HEK293 (cell line): ENCODE measurements at regions of chr2 and their contacts with region 1.

Region 1: GRCh38 chr2:18404708-18405107 is 155.7 kb downstream of the RDH14 start:
- H3K4me3 ChIP-seq: no peak overlapping the region
- H3K27ac ChIP-seq: no peak overlapping the region
- H3K4me1 ChIP-seq: no peaks in the 10 kb centered on the region
- CTCF ChIP-seq: no peak

Region 2: DNA sequence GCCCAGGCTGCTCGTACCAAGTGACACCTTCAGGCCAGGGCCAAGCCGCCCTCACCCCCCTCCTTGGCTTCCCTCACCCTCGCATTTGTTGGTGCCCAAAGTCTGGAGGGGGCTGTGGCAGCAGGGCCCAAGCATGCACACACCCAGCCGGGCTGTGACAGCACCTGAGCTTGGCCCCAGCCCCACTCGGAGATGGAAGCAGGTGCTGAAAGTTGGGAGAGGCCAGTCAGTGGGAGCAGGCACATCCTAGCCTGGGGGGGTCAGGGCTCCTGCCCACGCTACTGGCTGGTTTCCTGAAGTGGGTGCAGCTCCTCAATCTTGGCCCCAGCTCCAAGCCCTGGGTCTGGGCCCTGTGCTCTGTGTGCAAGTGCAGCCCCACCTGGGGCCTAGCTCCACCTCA is 72.2 kb before region 1 on chr2:
- CTCF ChIA-PET with region 1: no interaction called
- POLR2A ChIA-PET with region 1: no interaction called
- H3K4me3 ChIP-seq: no peak overlapping the region
- H3K27ac ChIP-seq: no peak overlapping the region
- H3K4me1 ChIP-seq: no peaks in the 10 kb centered on the region
- CTCF ChIP-seq: no peak

Region 3: GRCh38 chr2:18387441-18388206 is 17.1 kb before region 1 on chr2:
- CTCF ChIA-PET with region 1: interaction called, 65 read pairs
- POLR2A ChIA-PET with region 1: no interaction called
- H3K4me3 ChIP-seq: no peak overlapping the region
- H3K27ac ChIP-seq: no peak overlapping the region
- H3K4me1 ChIP-seq: no peaks in the 10 kb centered on the region
- CTCF ChIP-seq: peak; percentile 78

Region 4: GRCh38 chr2:18425210-18425703 is 20.5 kb after region 1 on chr2:
- CTCF ChIA-PET with region 1: interaction called, 10 read pairs
- POLR2A ChIA-PET with region 1: no interaction called
- H3K4me3 ChIP-seq: no peak overlapping the region
- H3K27ac ChIP-seq: no peak overlapping the region
- H3K4me1 ChIP-seq: no peaks in the 10 kb centered on the region
- CTCF ChIP-seq: no peak

Region 5: GRCh38 chr2:18623782-18624181 is 219.1 kb after region 1 on chr2:
- CTCF ChIA-PET with region 1: no interaction called
- POLR2A ChIA-PET with region 1: no interaction called
- H3K4me3 ChIP-seq: no peak overlapping the region
- H3K27ac ChIP-seq: no peak overlapping the region
- H3K4me1 ChIP-seq: no peaks in the 10 kb centered on the region
- CTCF ChIP-seq: no peak